ENCODE measurements at regions of chr11 and their contacts with region 1.

Region 1: DNA sequence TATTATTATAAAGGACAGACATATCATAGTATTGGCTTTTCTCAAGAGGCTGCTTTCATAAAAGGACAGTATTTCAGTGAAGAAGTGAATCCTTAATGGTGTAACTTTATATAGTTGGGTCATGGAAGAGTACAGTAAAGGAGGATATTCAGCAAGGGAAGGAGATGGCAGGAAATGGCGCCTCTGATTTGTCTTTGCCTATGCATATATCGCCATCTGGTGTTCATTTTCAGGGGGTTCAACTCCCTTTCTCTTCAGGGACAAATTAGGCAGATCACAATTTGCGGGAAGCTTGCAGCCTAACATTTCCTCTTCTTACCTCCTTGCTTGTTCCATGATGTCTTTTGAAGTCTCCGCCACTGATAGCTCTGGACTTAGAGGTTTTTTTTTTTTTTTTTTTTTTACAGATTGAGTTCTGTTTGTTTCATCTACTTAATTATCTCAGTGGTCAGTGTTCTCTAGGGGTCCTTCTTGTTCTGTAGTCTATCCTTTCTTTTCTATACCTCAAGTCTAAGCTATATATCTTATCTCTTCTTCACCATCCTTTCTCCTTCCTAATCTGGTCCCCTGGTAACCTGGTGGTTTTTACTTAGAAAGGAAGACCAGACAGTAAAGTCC is 21.8 kb upstream of the RRM1 start:
- DNase-seq: peak; percentile 79
- H3K4me3 ChIP-seq: no peak overlapping the region
- H3K27ac ChIP-seq: no peak overlapping the region
- H3K4me1 ChIP-seq: no peaks in the 10 kb centered on the region
- H3K27me3 ChIP-seq: no peaks in the 10 kb centered on the region
- CTCF ChIP-seq: peak; percentile 59 to 64
- POLR2A ChIP-seq: no peak

Region 2: DNA sequence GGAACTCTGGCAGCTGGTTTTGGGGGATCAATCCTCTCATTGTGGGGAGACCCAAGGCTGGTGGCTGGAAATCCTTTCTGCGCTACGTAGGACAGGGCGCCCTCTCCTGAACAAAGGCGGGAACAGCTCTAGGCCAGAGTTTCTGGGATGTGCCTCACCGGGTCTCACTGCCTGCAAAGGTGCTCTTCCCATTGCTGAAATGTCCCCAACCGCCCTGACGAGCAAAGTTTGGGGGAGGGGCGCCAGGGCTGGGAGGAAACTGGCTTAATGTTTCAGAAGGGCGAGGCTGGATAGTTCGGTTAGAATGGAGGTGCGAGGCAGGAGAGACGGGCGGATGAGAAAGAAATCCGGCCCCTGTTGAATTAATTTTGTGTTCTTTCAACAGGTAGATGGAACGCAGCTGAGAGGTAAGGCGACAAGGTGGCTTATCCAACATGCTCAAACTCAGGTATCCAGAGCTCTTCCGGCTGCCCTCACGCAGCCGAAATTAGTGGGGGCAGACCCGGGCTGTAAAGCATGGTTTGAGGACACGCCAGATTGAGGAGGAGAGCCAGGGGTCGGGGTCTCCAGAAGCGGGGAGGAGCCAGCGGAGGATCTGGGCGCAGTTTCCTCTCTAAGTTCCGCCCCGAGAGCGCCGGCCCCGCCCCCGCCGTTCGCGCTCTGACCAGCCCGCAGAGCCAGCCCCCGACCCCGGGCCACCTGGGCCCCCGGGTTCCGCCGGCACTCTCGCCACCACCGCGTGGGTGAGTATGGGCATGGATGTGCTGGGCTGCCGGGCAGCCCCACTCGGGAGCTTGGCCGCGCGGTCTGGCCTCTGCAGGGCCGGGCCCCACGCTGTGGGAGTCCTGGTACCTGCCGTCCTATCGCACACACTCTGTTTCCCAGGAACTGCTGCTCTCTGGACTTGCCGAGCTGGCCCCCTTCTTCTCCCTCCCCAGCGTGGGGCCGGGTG is 264.6 kb before region 1 on chr11 and contains the start of gene PGAP2:
- CTCF ChIA-PET with region 1: interaction called, 28 read pairs
- POLR2A ChIA-PET with region 1: no interaction called
- dilution Hi-C with region 1: no loop called
- intact Hi-C with region 1: no loop called
- DNase-seq: peak; percentile 57
- H3K4me3 ChIP-seq: peak within 1 kb of the TSS; percentile 62 to 93 (median 91)
- H3K27ac ChIP-seq: peak within 1 kb of the TSS; percentile 37
- H3K4me1 ChIP-seq: peaks cover 11% of the 10 kb centered on the region
- H3K27me3 ChIP-seq: no peaks in the 10 kb centered on the region
- CTCF ChIP-seq: peak; percentile 53 to 83
- POLR2A ChIP-seq: no peak
- total RNA-seq, gene PGAP2: 18.3 and 18.5 TPM in 2 replicates

Region 3: GRCh38 chr11:3841426-3842350 is 231.1 kb before region 1 on chr11:
- CTCF ChIA-PET with region 1: interaction called, 871 read pairs
- POLR2A ChIA-PET with region 1: no interaction called
- dilution Hi-C with region 1: no loop called
- intact Hi-C with region 1: no loop called
- DNase-seq: peak; percentile 91
- H3K4me3 ChIP-seq: peak overlapping the region; percentile 3 to 50 (median 31)
- H3K27ac ChIP-seq: peak overlapping the region; percentile 55
- H3K4me1 ChIP-seq: peaks cover 29% of the 10 kb centered on the region
- H3K27me3 ChIP-seq: no peaks in the 10 kb centered on the region
- CTCF ChIP-seq: peak; percentile 72 to 95
- POLR2A ChIP-seq: peak; percentile 18

Region 4: DNA sequence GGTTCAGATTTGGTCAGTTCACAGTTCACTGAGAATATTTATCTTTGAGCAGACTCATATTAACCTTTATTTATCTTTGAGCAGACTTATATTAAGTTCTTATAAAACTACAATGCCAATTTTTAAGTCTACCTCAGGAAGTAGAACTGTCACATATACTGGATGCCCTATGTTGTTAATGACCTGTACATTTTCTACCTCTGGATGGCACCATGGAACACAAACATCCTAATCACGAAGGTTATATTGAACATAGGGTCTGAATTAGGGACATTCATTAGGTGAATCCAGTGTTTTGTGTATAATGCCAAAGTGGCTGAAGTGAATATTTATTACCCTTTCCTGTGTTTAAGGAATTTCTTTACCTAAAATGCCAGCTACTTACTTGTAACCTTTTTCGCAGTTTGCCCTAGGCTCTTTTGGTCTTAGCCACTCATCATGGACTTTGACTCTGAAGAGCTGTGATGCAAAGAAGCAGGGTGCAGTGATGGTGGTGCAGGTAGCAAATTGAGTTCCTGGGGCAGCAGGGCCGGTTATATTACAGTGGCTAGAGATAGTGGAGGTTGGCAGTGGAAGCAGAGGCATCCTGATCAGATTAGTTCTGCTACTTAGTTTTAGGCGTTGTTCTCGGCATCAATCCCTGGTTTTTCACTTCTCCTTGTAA is 145.5 kb before region 1 on chr11:
- CTCF ChIA-PET with region 1: interaction called, 16 read pairs
- POLR2A ChIA-PET with region 1: no interaction called
- dilution Hi-C with region 1: no loop called
- intact Hi-C with region 1: no loop called
- DNase-seq: no peak
- H3K4me3 ChIP-seq: no peak overlapping the region
- H3K27ac ChIP-seq: no peak overlapping the region
- H3K4me1 ChIP-seq: no peaks in the 10 kb centered on the region
- H3K27me3 ChIP-seq: no peaks in the 10 kb centered on the region
- CTCF ChIP-seq: no peak
- POLR2A ChIP-seq: no peak

Region 5: DNA sequence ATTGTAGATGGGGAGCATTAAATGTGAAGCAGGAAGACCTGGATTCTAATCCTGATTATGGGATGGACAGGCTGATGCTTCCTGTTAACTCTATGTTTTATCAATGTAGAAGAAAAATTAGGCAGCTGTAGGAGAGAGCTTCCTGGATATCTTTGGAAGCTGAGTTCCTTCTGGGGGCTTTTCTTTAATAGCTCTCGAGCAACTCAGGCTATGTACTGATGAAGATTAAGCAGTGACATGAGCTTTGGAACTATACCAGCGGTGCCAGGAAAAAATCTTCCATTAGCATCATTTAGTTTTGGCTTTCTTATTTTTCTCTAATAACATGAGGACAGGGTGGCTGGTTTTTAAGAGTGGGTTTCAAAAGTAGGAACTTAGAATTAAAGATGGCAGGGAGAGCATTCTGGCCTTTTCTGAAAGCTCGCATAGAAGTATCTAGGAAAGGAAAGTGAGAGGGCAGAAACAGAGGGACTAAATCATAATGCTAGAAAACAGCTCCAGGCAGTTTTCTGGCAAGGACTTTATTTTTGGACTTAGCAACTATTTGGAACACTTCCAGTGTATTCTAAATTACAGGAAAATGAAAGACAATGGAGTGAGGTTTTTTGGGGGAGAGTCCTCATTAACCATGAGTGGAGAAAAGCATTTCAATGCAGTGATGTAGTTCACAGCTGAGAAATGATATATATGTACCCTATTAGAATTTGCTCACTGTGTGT is 47.4 kb before region 1 on chr11:
- CTCF ChIA-PET with region 1: interaction called, 19 read pairs
- POLR2A ChIA-PET with region 1: no interaction called
- dilution Hi-C with region 1: no loop called
- intact Hi-C with region 1: no loop called
- DNase-seq: peak; percentile 95
- H3K4me3 ChIP-seq: peak overlapping the region in 1 of 3 experiments; percentile 28
- H3K27ac ChIP-seq: peak overlapping the region; percentile 80
- H3K4me1 ChIP-seq: peaks cover 23% of the 10 kb centered on the region
- H3K27me3 ChIP-seq: no peaks in the 10 kb centered on the region
- CTCF ChIP-seq: no peak
- POLR2A ChIP-seq: no peak

Region 6: DNA sequence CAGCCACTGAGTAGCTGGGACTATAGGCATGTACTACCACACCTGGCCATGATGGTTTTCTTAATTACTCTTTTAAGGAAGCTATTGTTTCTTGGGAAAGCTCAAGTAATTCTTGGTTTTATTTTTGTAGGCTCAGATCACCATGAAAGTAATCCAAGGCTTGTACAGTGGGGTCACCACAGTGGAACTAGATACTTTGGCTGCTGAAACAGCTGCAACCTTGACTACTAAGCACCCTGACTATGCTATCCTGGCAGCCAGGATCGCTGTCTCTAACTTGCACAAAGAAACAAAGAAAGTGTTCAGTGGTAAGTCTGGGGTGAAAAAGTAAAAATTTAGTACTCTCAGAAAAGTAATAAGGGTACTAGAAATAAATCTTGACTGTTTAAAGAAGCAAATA is 33.1 kb after region 1 on chr11:
- CTCF ChIA-PET with region 1: no interaction called
- POLR2A ChIA-PET with region 1: no interaction called
- dilution Hi-C with region 1: no loop called
- intact Hi-C with region 1: no loop called
- DNase-seq: no peak
- H3K4me3 ChIP-seq: no peak overlapping the region
- H3K27ac ChIP-seq: no peak overlapping the region
- H3K4me1 ChIP-seq: no peaks in the 10 kb centered on the region
- H3K27me3 ChIP-seq: no peaks in the 10 kb centered on the region
- CTCF ChIP-seq: no peak
- POLR2A ChIP-seq: no peak